IMR-90 (cell line): ENCODE measurements at regions of chr2 and their contacts with region 1.

Region 1: GRCh38 chr2:120680136-120680761 is 55.4 kb upstream of the GLI2 start:
- DNase-seq: peak; percentile 88
- ATAC-seq: peak; percentile 67
- H3K4me3 ChIP-seq: no peak overlapping the region
- H3K27ac ChIP-seq: no peak overlapping the region
- H3K4me1 ChIP-seq: peaks cover 18% of the 10 kb centered on the region
- H3K27me3 ChIP-seq: peaks cover 12% of the 10 kb centered on the region
- CTCF ChIP-seq: peak; percentile 78
- POLR2A ChIP-seq: peak; percentile 40; the same call in 1 of the 2 replicates
- RAD21 ChIP-seq: peak; percentile 92

Region 2: DNA sequence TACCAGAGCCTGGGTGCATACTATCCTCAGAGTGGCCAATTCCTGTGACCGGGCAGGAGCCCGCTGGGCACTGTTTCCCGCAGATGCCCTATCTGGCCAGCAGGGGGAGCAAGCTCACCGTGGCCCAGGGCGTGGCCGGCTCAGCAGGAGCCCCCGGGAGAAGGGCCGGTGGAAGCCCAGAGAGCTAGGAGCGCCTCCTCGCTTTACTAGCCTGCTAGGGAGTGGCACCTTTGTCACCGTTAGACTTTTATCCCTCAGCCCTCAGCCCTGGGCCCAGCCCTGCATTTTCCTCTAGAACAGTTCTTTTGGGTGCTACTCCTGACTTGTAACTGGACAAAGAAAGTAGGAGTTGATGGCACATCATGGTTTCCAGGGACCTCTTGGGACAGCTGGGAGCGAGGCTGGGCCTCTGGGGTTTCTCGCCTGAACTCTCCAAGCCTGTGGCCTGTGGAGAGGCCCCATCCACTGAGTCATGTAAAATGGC is 977.3 kb before region 1 on chr2:
- CTCF ChIA-PET with region 1: no interaction called
- POLR2A ChIA-PET with region 1: no interaction called
- dilution Hi-C with region 1: no loop called
- in situ Hi-C with region 1: no loop called
- intact Hi-C with region 1: loop called (anchors 10 kb)
- DNase-seq: peak; percentile 46
- ATAC-seq: peak; percentile 99
- H3K4me3 ChIP-seq: no peak overlapping the region
- H3K27ac ChIP-seq: no peak overlapping the region
- H3K4me1 ChIP-seq: no peaks in the 10 kb centered on the region
- H3K27me3 ChIP-seq: peaks cover 14% of the 10 kb centered on the region; the same call in 1 of the 2 replicates
- CTCF ChIP-seq: peak; percentile 91
- POLR2A ChIP-seq: no peak
- RAD21 ChIP-seq: peak; percentile 91

Region 3: GRCh38 chr2:119759451-119760236 is 920.6 kb before region 1 on chr2 and contains the start of gene PTPN4:
- CTCF ChIA-PET with region 1: no interaction called
- POLR2A ChIA-PET with region 1: no interaction called
- dilution Hi-C with region 1: no loop called
- in situ Hi-C with region 1: no loop called
- intact Hi-C with region 1: loop called (anchors 10 kb)
- DNase-seq: peak; percentile 98
- ATAC-seq: peak; percentile 95
- H3K4me3 ChIP-seq: peak within 1 kb of the TSS; percentile 80
- H3K27ac ChIP-seq: peak within 1 kb of the TSS; percentile 79
- H3K4me1 ChIP-seq: no peaks in the 10 kb centered on the region
- H3K27me3 ChIP-seq: no peaks in the 10 kb centered on the region
- CTCF ChIP-seq: no peak
- POLR2A ChIP-seq: 0 out of 2 replicates have a peak, but pooled peaks have one; percentile 39
- RAD21 ChIP-seq: no peak
- total RNA-seq, gene PTPN4: 13.6 and 19.2 TPM in 2 replicates

Region 4: DNA sequence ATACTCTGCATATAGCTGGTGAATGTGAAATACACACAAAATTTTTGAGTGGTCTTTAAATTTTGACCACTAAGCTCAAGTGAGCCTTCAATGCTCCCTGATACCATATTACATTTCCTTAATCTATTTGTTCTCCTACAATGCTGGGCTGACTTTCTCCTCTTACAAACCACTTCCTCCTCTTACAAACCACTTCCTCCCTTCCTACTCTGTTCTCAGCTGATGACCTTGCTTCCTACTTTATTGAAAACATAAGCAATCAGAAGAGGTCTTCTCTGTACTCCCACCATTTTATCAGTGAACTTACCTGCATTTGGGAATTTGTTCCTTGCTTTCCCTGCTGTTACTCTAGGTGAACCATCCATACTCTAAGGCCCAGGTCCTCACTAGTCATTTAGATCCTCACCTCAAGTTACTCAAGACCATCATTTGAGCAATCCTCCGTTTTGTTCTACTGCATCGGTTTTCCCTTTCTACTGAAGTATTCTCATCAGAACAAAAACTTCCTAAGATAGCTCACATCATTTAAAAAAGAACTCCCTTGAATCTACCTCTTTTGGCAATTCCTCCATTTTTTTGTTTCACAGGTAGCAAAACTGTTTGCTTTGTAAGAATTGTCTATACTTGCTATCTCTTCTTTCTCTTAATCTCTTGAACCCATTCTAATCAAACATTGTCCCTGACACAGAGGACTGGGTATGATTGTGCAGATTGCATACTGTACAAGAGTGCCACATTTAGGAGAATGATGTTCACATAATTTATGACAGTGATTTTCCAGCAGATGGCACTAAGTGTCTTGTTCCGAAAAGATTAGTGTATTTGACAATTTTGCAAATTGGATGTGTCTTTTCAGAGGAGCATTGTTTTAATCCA is 570.8 kb before region 1 on chr2:
- CTCF ChIA-PET with region 1: no interaction called
- POLR2A ChIA-PET with region 1: no interaction called
- dilution Hi-C with region 1: no loop called
- in situ Hi-C with region 1: no loop called
- intact Hi-C with region 1: loop called (anchors 5 kb)
- DNase-seq: peak; percentile 59
- ATAC-seq: peak; percentile 71
- H3K4me3 ChIP-seq: no peak overlapping the region
- H3K27ac ChIP-seq: no peak overlapping the region
- H3K4me1 ChIP-seq: no peaks in the 10 kb centered on the region; the same call in none of the 2 replicates
- H3K27me3 ChIP-seq: no peaks in the 10 kb centered on the region
- CTCF ChIP-seq: peak; percentile 54
- POLR2A ChIP-seq: no peak
- RAD21 ChIP-seq: peak; percentile 67

Region 5: DNA sequence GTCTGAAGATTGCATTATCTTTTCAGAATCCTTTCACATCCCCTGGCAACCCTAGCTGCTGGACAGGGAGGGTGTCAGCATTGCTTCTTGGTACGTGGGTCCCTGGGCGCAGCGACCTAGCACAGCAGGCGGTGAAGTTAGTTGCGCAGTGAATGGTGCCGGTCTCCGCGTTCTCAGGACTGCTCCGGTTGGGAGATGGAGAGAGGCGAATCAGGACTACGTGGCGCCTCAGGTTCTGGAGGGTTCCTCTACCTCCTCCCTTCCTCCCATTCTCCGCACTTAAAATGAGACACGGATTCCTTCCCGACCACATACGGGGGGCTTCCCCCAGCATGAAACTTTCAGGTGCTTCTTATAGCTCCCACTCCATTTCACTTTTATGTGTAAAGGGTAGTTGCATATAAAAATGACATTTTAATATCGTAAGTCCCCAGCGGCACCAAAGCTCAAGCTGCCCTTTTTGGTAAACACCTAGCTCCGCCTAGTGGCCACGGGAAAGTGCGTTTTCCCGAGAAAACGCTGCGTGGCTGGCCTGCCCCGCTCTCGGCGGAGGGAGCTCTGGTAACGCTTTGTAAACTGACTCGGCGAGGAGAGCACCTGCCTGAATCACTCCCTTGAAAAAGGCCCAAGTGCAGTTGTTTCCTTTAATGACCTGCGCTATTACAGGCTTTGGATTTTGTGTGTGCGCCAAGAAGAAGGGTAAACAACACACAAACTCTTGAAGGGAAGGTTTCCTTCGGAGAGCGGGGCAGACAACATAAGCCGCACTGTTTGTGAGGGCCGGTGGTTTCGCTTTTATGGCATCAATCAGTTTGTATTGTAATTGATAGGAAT is 367.2 kb before region 1 on chr2:
- CTCF ChIA-PET with region 1: interaction called, 6 read pairs
- POLR2A ChIA-PET with region 1: no interaction called
- dilution Hi-C with region 1: no loop called
- in situ Hi-C with region 1: no loop called
- intact Hi-C with region 1: loop called (anchors 1 kb)
- DNase-seq: peak; percentile 82
- ATAC-seq: peak; percentile 93
- H3K4me3 ChIP-seq: peak overlapping the region; percentile 44
- H3K27ac ChIP-seq: no peak overlapping the region
- H3K4me1 ChIP-seq: no peaks in the 10 kb centered on the region; the same call in 1 of the 2 replicates
- H3K27me3 ChIP-seq: peaks cover 10% of the 10 kb centered on the region
- CTCF ChIP-seq: peak; percentile 92
- POLR2A ChIP-seq: no peak; the same call in 1 of the 2 replicates
- RAD21 ChIP-seq: peak; percentile 86

Region 6: DNA sequence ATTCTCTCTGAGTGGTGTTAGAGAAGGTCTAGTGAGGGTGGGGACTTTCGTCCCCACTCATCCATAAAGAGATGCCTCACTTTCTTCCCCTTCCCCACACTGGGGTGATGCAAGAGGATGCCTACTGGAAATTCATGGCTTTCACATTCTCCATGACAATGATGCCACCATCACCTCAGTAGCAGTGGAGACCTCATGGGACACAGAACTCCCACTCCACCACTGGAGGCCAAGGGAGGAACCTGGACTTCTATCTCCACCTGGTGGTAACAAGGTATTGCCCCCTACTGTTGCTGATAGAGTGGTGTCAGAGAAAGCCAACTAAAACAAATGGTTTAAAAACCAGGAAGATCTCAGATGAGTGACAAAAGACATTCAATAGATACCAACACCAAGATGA is 223.4 kb before region 1 on chr2:
- CTCF ChIA-PET with region 1: no interaction called
- POLR2A ChIA-PET with region 1: no interaction called
- dilution Hi-C with region 1: no loop called
- in situ Hi-C with region 1: no loop called
- intact Hi-C with region 1: loop called (anchors 5 kb)
- DNase-seq: no peak
- ATAC-seq: no peak
- H3K4me3 ChIP-seq: no peak overlapping the region
- H3K27ac ChIP-seq: no peak overlapping the region
- H3K4me1 ChIP-seq: peaks cover 13% of the 10 kb centered on the region
- H3K27me3 ChIP-seq: no peaks in the 10 kb centered on the region
- CTCF ChIP-seq: no peak
- POLR2A ChIP-seq: no peak
- RAD21 ChIP-seq: no peak

Region 7: DNA sequence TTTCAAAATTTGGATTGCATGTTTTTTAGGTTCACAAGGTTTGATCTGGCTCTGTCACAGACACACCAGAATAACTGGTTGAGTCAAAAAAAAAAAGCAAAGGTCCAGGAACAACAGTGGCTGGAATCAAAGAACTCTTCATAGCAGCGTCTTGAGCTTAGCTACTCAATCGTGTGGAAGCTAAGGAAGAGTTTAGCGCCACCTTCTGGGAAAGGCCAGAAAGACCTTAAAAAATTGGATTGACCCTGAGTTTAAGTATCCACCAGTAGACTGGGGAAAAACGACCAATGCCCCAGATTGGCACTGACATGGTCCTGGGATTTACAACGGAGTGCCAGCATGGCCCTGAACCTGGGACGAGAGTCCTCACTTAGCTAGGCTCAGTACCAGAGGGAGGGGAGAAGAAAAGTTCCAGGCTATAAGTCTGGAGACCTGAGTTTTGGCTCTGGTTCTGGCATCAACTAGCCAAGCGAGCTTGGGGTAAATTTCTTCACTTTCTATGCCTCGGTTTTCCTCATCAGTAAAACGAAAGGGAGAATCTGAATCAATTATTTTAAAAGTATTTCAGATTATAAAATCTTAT is 675.9 kb after region 1 on chr2:
- CTCF ChIA-PET with region 1: no interaction called
- POLR2A ChIA-PET with region 1: no interaction called
- dilution Hi-C with region 1: no loop called
- in situ Hi-C with region 1: loop called (anchors 25 kb)
- intact Hi-C with region 1: no loop called
- DNase-seq: peak; percentile 69
- ATAC-seq: peak; percentile 85
- H3K4me3 ChIP-seq: no peak overlapping the region
- H3K27ac ChIP-seq: no peak overlapping the region
- H3K4me1 ChIP-seq: peaks cover 8% of the 10 kb centered on the region
- H3K27me3 ChIP-seq: no peaks in the 10 kb centered on the region
- CTCF ChIP-seq: peak; percentile 70
- POLR2A ChIP-seq: no peak
- RAD21 ChIP-seq: peak; percentile 55